ENCODE measurements at regions of chr12 and their contacts with region 1.

Region 1: DNA sequence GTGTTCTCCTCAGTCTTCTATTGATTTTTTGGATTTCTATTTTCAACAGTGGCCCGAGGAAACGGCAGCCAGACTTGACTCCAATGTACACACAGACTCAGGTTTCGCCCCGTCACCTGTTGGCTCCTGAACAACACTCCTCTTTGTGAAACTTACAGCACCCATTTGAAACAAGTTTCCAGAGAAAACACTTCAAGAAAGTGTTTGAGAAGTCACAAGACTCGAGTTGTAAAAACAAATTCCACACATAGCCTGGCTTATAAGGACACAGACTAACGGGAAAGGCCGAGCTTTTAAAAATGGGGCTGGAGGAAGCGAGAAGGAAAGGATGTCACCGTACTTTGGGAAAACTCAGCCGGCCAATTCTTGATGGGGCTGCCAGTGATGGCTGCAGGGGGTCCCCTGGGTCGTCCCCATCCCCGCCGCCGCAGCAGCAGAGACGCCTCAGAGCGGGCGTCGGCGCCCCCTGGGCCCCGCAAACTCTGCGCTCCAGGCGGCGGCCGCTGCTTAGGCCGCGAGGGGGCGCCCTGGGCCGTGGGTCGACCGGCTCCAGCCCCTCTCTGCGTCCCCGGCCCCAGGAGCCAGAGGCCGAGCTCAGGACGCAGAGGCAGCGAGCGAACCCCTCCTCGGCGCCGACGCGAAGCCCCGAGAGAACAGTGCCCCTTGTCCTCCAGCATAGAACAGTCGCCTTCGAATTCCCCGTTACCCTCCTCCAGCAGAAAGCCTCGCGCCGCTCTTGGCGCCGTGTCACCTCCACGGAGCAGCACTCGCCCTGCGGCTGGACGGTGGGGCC is 106.9 kb downstream of the PRICKLE1 start:
- DNase-seq: peak; percentile 78 to 93 (median 91)
- ATAC-seq: peak; percentile 92 to 93
- H3K4me3 ChIP-seq: peak overlapping the region; percentile 79
- H3K27ac ChIP-seq: peak overlapping the region; percentile 94
- H3K4me1 ChIP-seq: peaks cover 3% of the 10 kb centered on the region
- H3K27me3 ChIP-seq: no peaks in the 10 kb centered on the region

Region 2: GRCh38 chr12:42568952-42569915 is 86.6 kb after region 1 on chr12:
- intact Hi-C with region 1: loop called (anchors 2 to 5 kb)
- DNase-seq: no peak
- ATAC-seq: peak; percentile 45 to 68
- H3K4me3 ChIP-seq: no peak overlapping the region
- H3K27ac ChIP-seq: no peak overlapping the region
- H3K4me1 ChIP-seq: no peaks in the 10 kb centered on the region
- H3K27me3 ChIP-seq: no peaks in the 10 kb centered on the region

Region 3: DNA sequence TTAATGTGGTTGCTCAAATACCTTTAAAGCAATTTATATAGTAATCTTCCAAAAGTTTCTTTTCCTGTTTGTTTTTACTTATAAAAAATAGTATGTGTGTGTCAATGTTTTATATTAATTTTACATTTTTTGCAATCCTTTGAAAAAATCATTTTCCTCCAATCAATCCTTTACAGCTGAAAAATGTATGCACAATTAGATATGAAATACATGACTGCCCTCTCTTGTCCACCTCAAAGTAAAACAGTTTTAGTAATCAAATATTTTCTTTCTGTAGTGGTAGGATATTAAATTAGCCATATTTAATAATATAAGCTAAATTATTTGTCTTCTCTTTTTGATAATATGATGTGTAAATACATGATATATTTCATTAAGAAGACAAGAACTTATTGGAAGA is 799.5 kb after region 1 on chr12:
- intact Hi-C with region 1: loop called in 1 of 4 experiments (anchors 5 kb)
- DNase-seq: no peak
- ATAC-seq: no peak
- H3K4me3 ChIP-seq: no peak overlapping the region
- H3K27ac ChIP-seq: no peak overlapping the region
- H3K4me1 ChIP-seq: no peaks in the 10 kb centered on the region
- H3K27me3 ChIP-seq: no peaks in the 10 kb centered on the region

Region 4: DNA sequence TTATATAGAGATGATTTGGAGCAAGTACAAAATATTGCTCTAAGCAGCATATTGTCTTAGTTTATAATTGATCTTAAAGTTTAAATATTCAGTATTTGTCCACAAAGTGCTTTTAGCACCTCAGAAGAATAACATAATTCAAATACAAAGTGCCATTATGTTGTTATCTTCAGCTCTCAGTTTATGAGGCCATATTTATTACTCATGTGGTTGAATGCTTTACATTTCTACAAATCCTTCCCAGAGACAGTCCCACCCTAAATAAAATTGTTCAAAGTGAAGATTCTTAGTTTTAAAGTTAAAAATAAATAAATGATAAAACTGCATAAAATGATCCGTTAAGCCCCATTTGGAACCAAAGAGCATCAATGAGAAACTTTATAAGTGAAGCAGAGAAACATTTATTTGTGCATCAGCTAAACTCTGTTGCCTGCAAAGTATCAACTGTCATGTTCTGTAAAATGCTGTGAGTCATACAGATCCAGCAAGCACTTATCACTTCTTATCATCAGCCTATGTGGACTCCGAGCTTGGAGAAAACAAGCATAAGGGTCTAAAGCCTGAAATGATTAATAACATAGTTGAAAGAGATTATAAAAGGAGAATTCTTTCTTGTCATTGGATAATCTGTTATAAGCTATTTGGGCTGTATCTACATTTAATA is 850.5 kb after region 1 on chr12:
- intact Hi-C with region 1: loop called in 1 of 4 experiments (anchors 5 kb)
- DNase-seq: no peak
- ATAC-seq: no peak
- H3K4me3 ChIP-seq: no peak overlapping the region
- H3K27ac ChIP-seq: no peak overlapping the region
- H3K4me1 ChIP-seq: no peaks in the 10 kb centered on the region
- H3K27me3 ChIP-seq: no peaks in the 10 kb centered on the region

Measured in right cardiac atrium (tissue), 5 donors.